ENCODE measurements at regions of chr11 and their contacts with region 1.

Region 1: GRCh38 chr11:62678770-62679696 is at the start of gene UBXN1:
- DNase-seq: peak; percentile 87 to 92
- ATAC-seq: peak; percentile 83 to 85
- H3K4me3 ChIP-seq: peak within 1 kb of the TSS; percentile 91 to 98 (median 93)
- H3K27ac ChIP-seq: peak within 1 kb of the TSS; percentile 88 to 97 (median 94)
- H3K4me1 ChIP-seq: peaks cover 21 to 44% of the 10 kb centered on the region in 2 donors
- H3K27me3 ChIP-seq: no peaks in the 10 kb centered on the region
- CTCF ChIP-seq: no peak
- POLR2A ChIP-seq: peak; percentile 75 to 85
- total RNA-seq, gene UBXN1: 216 to 450 (median 265) TPM

Region 2: GRCh38 chr11:62601394-62602140 is 77.5 kb before region 1 on chr11 and contains the start of gene MTA2:
- in situ Hi-C with region 1: no loop called
- intact Hi-C with region 1: loop called (anchors 5 kb)
- DNase-seq: peak; percentile 97
- ATAC-seq: peak; percentile 83 to 85
- H3K4me3 ChIP-seq: peak within 1 kb of the TSS; percentile 84 to 99 (median 98)
- H3K27ac ChIP-seq: peak within 1 kb of the TSS; percentile 87 to 97 (median 94)
- H3K4me1 ChIP-seq: peaks cover 17 to 29% of the 10 kb centered on the region in 2 donors
- H3K27me3 ChIP-seq: no peaks in the 10 kb centered on the region
- CTCF ChIP-seq: no peak
- POLR2A ChIP-seq: peak; percentile 43 to 57
- total RNA-seq, gene MTA2: 28.0 to 47.1 (median 31.7) TPM

Region 3: GRCh38 chr11:62652161-62653006 is 26.6 kb before region 1 on chr11:
- in situ Hi-C with region 1: no loop called
- intact Hi-C with region 1: loop called (anchors 2 kb)
- DNase-seq: no peak
- ATAC-seq: no peak
- H3K4me3 ChIP-seq: peak overlapping the region; percentile 78 to 91 (median 86)
- H3K27ac ChIP-seq: peak overlapping the region; percentile 89 to 95 (median 92)
- H3K4me1 ChIP-seq: peaks cover 13 to 18% of the 10 kb centered on the region in 2 donors
- H3K27me3 ChIP-seq: no peaks in the 10 kb centered on the region
- CTCF ChIP-seq: no peak
- POLR2A ChIP-seq: no peak

Region 4: DNA sequence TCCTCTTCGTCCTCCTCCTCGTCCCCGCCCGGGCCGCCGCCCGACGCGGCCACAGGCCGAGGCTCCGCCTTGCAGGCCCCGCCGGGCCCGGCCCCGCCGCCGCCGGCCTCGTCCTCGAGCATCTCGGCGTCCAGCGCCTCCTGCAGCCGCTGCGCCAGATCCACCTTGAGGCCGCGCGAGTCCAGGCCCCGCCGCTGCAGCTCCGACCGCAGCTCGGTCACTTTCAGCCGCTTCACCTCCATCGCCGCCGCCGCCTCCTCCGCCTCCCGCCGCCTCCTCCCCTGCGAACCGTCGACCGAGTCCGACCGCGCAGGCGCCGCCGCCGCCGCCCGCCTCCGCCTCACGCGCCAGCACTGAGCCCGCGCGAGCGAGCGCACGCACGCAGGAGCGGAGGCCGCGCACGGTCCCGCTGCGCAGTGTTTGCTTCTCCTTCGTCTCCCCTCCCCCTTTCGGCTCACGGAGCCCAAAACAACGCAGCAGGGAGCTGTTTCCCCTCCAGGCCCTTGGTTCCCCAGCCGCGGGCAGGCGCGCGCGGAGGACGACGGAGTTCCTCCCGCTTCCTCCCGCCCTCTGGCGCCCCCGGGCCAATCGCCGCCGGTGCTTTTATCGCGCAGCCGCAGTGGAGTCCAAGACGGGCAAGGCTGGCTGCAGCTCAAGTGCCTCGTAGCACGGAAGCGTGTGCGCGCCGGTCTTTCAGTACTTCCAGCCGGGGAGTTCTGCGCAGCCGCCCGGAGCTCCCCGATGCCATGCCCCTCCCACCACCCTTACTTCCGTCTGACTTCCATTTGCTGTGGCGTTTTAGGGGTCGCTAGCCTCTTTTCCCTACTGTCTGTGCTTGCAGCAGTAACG is 48.1 kb after region 1 on chr11 and contains the start of gene HNRNPUL2:
- in situ Hi-C with region 1: no loop called
- intact Hi-C with region 1: loop called (anchors 1 kb)
- DNase-seq: peak; percentile 97 to 99
- ATAC-seq: peak; percentile 79 to 81
- H3K4me3 ChIP-seq: peak within 1 kb of the TSS; percentile 63 to 95 (median 80)
- H3K27ac ChIP-seq: peak within 1 kb of the TSS; percentile 87 to 94 (median 90)
- H3K4me1 ChIP-seq: peaks cover 44 to 47% of the 10 kb centered on the region in 2 donors
- H3K27me3 ChIP-seq: no peaks in the 10 kb centered on the region
- CTCF ChIP-seq: no peak
- POLR2A ChIP-seq: peak; percentile 93 to 97
- total RNA-seq, gene HNRNPUL2: 4.8 to 14.9 (median 11.8) TPM

Region 5: GRCh38 chr11:62771144-62772021 is 92.3 kb after region 1 on chr11 and contains the start of gene TAF6L:
- in situ Hi-C with region 1: no loop called
- intact Hi-C with region 1: no loop called
- DNase-seq: peak; percentile 99
- ATAC-seq: peak; percentile 92 to 97
- H3K4me3 ChIP-seq: peak within 1 kb of the TSS; percentile 74 to 87 (median 76)
- H3K27ac ChIP-seq: peak within 1 kb of the TSS; percentile 89 to 99 (median 96)
- H3K4me1 ChIP-seq: peaks cover 18 to 23% of the 10 kb centered on the region in 2 donors
- H3K27me3 ChIP-seq: no peaks in the 10 kb centered on the region
- CTCF ChIP-seq: peak in 1 of 5 experiments; percentile 38
- POLR2A ChIP-seq: peak in 1 of 2 donors; percentile 45
- total RNA-seq, gene TAF6L: 13.5 to 43.2 (median 21.4) TPM

Measured in gastrocnemius medialis (tissue), 4 donors.